HCT116 (cell line): ENCODE measurements at regions of chr11 and their contacts with region 1.

Region 1: DNA sequence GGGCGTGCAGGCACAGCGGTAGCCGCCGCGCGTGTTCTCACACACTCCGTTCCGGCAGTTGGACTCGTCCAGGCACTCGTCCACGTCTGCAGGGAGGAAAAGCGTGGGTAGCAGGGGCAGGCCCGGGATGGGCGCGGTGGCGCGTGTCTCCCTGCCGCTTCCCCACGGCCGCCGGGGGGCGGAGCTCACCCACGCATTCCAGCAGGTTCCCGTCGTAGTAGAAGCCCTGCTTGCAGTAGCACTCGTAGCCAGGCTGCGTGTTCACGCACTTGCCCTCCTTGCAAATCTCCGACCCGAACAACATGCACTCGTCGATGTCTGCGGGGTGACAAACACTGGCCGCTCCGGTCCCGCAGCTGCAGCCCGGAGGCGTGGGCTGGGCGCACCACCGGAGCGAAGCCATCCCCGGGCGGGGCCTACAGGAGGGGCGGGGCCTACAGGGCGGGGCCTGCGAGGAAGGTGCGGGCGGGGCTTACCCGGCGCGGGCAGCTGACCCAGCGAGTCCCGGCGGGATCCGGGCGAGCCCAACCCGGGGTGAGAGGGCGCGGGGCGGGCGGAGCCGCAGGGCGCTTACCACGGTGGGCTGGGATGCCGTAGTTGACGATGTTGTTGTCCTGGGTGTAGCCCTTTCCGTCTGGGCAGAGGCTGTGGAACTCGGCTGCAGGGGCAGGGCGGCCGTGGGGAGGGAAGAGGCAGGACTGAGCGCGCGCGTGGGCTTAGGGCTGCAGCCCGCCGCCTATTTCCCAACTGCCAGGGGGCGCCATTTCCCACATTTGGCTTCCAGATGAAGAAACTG is 15.6 kb downstream of the SCYL1 start:
- DNase-seq: peak; percentile 64
- ATAC-seq: peak; percentile 73
- H3K4me3 ChIP-seq: peak overlapping the region; percentile 68 to 85
- H3K27ac ChIP-seq: peak overlapping the region; percentile 100
- H3K4me1 ChIP-seq: peaks cover 13 to 39% of the 10 kb centered on the region in 2 experiments; a peak in 3 of 4 replicates
- H3K27me3 ChIP-seq: no peaks in the 10 kb centered on the region
- CTCF ChIP-seq: peak in 2 of 3 experiments; percentile 82 to 85; a peak in 4 of 6 replicates
- POLR2A ChIP-seq: no peak
- RAD21 ChIP-seq: no peak

Region 2: DNA sequence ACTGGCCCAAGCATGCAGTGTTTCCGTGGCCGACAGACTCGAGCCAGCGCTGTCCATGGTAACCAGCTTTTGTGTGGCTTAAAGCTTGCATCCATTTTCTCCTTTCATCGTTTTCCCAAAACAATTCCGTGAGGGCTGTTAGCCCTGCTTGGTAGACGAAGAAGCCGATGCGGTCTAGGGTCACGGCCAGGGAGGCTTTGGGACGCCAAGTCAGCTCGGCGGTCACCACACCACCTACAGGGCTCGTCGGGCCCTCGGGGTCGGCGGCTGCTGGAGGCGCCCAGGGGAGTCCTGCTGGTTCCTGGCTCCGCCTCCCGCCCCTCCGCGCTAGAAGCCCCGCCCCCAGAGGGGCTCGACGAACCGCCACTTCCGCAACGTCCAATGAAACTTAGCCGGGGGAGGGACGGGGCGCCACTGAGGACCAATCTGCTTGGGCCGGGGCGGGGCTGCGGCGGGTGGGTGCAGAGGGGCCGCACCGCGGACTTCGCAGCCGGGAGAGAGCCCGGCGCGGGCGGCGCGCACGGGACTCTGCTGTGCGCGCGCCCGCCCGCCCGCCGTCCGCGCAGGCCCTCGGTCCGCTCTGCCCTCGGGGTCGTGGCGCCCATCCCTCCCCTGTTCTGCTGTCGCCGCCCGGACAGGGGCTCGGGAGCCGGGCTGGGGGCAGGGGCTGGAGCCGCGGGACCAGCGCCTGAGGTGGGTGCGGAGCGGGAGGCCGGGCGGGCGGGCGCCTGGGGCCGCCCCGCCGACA is 186.1 kb before region 1 on chr11 and contains the start of gene TIGD3:
- CTCF ChIA-PET with region 1: no interaction called
- POLR2A ChIA-PET with region 1: no interaction called
- RAD21 ChIA-PET with region 1: no interaction called
- intact Hi-C with region 1: no loop called
- DNase-seq: peak; percentile 81
- ATAC-seq: peak; percentile 96
- H3K4me3 ChIP-seq: peak within 1 kb of the TSS; percentile 44 to 60
- H3K27ac ChIP-seq: peak within 1 kb of the TSS; percentile 63
- H3K4me1 ChIP-seq: peaks cover 3 to 20% of the 10 kb centered on the region in 2 experiments; a peak in 2 of 4 replicates
- H3K27me3 ChIP-seq: no peaks in the 10 kb centered on the region
- CTCF ChIP-seq: no peak
- POLR2A ChIP-seq: peak; percentile 69
- RAD21 ChIP-seq: no peak
- total RNA-seq, gene TIGD3: 2.4 TPM

Region 3: GRCh38 chr11:65524741-65525545 is 15.6 kb before region 1 on chr11 and contains the start of gene SCYL1:
- CTCF ChIA-PET with region 1: interaction called, 4 read pairs
- POLR2A ChIA-PET with region 1: interaction called, 11 read pairs
- RAD21 ChIA-PET with region 1: interaction called in 1 of 2 experiments, 4 read pairs
- intact Hi-C with region 1: no loop called
- DNase-seq: no peak
- ATAC-seq: peak; percentile 91
- H3K4me3 ChIP-seq: peak within 1 kb of the TSS; percentile 90 to 94
- H3K27ac ChIP-seq: peak within 1 kb of the TSS; percentile 86
- H3K4me1 ChIP-seq: peaks cover 7 to 17% of the 10 kb centered on the region in 2 experiments; a peak in 3 of 4 replicates
- H3K27me3 ChIP-seq: no peaks in the 10 kb centered on the region
- CTCF ChIP-seq: no peak
- POLR2A ChIP-seq: no peak
- RAD21 ChIP-seq: no peak
- total RNA-seq, gene SCYL1: 104 TPM

Region 4: DNA sequence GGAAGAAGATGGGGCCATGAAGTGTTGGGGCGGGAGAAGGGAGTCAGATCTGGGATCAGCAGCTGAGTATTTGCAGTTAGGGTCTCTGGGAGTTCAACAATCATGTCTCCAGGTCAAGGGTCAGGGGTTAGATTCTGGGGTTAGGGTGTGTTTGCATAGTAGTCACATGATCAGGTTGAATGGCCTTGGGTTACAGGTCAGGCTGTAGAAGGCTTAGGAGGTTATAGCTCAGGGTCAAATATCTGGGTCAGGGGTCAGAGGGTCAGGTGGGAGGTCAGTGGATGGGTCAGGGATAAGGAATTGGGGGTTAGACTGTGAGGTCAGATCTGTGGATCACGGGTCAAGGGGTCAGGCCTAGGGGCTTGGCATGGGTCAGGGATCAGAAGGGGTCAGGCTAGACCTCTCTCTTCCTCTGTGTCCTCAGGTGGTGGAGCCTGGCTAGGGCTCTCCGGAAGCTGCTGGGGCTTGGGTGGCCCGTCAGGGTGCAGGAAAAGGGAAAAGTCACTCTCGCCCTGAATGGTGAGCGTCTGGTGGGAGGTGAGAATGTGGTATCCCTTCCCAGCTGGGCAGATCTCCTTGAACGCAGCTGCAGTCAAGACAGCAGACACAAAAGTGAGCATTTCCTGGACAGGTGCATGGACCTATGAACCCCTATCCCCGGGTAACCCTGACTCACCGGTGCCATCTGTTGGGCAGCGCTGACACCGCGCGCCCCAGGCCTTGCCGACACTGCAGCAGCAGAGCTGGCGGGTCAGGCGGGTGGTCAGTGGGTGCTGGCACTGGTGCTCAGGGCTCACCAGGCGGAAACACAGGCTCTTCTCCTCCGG is 11.3 kb after region 1 on chr11:
- CTCF ChIA-PET with region 1: interaction called, 25 read pairs
- POLR2A ChIA-PET with region 1: interaction called, 7 read pairs
- RAD21 ChIA-PET with region 1: interaction called in 1 of 2 experiments, 3 read pairs
- intact Hi-C with region 1: no loop called
- DNase-seq: peak; percentile 64
- ATAC-seq: peak; percentile 43
- H3K4me3 ChIP-seq: peak overlapping the region; percentile 34 to 50
- H3K27ac ChIP-seq: peak overlapping the region; percentile 70
- H3K4me1 ChIP-seq: peaks cover 58 to 65% of the 10 kb centered on the region in 2 experiments
- H3K27me3 ChIP-seq: no peaks in the 10 kb centered on the region
- CTCF ChIP-seq: peak in 2 of 3 experiments; percentile 72 to 83; a peak in 4 of 6 replicates
- POLR2A ChIP-seq: no peak
- RAD21 ChIP-seq: no peak

Region 5: GRCh38 chr11:65558002-65558931 is 17.8 kb after region 1 on chr11 and contains the start of gene LTBP3:
- CTCF ChIA-PET with region 1: interaction called, 29 read pairs
- POLR2A ChIA-PET with region 1: interaction called, 9 read pairs
- RAD21 ChIA-PET with region 1: interaction called, 6 to 9 read pairs
- intact Hi-C with region 1: no loop called
- DNase-seq: no peak
- ATAC-seq: peak; percentile 21
- H3K4me3 ChIP-seq: peak within 1 kb of the TSS; percentile 64 to 68
- H3K27ac ChIP-seq: peak within 1 kb of the TSS; percentile 99
- H3K4me1 ChIP-seq: peaks cover 83 to 94% of the 10 kb centered on the region in 2 experiments
- H3K27me3 ChIP-seq: no peaks in the 10 kb centered on the region
- CTCF ChIP-seq: no peak
- POLR2A ChIP-seq: no peak
- RAD21 ChIP-seq: no peak
- total RNA-seq, gene LTBP3: 248 TPM

Region 6: GRCh38 chr11:65569973-65570918 is 29.8 kb after region 1 on chr11 and contains the start of gene ZNRD2:
- CTCF ChIA-PET with region 1: interaction called, 89 read pairs
- POLR2A ChIA-PET with region 1: interaction called, 15 read pairs
- RAD21 ChIA-PET with region 1: interaction called, 4 to 32 read pairs
- intact Hi-C with region 1: loop called (anchors 1 kb)
- DNase-seq: peak; percentile 97
- ATAC-seq: peak; percentile 72
- H3K4me3 ChIP-seq: peak within 1 kb of the TSS; percentile 97 to 100
- H3K27ac ChIP-seq: peak within 1 kb of the TSS; percentile 94
- H3K4me1 ChIP-seq: peaks cover 35 to 68% of the 10 kb centered on the region in 2 experiments
- H3K27me3 ChIP-seq: no peaks in the 10 kb centered on the region
- CTCF ChIP-seq: peak in 1 of 3 experiments; percentile 29; a peak in 2 of 6 replicates
- POLR2A ChIP-seq: peak; percentile 36
- RAD21 ChIP-seq: no peak
- total RNA-seq, gene ZNRD2: 66.8 TPM